ENCODE measurements at regions of chrX and their contacts with region 1.

Region 1: DNA sequence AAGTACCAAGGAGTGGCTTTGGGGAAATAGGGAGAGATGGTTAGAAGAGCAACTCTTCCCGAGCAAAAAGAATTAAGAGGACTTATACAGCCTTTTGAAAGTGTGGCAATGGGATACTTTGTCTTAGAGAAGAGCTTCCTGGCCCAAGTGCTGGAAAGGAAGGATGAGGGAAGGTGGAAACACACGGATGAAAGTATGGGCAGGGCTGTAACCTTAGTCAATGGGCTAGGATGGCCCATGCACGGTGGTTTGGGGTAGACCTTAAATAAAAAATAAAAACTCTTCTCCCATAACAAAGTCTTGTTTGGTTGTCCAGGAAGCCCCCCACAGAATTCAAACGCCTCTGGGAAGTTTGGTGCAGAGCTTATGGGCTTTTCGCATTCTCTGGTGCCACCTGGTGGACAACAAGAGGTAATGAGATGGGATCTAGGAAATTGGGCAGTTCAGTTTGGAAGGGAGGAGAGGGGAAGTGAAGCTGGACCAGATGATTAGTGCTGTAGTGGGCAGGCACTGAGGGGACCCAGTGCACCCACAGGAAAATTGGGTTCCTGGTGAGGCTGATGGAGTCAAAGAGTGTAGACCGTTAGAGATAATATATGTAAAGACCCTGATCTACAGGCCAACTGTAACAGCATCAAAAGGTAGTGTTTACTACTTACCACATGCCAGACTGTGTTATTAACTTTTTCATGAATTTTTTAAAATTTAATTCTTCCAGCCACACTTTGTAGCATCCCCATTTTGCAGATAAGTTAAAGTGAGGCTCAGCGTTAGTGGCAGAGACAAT is 13.8 kb upstream of the ENOX2 start:
- DNase-seq: peak in 4 of 5 donors; percentile 36 to 75 (median 55)
- H3K4me3 ChIP-seq: no peak overlapping the region
- H3K27ac ChIP-seq: no peak overlapping the region
- H3K4me1 ChIP-seq: no peaks in the 10 kb centered on the region
- H3K27me3 ChIP-seq: peaks cover 4% of the 10 kb centered on the region
- CTCF ChIP-seq: peak; percentile 76

Region 2: GRCh38 chrX:129593137-129593536 is 1323.7 kb before region 1 on chrX:
- intact Hi-C with region 1: loop called (anchors 10 kb)
- DNase-seq: no peak
- H3K4me3 ChIP-seq: no peak overlapping the region
- H3K27ac ChIP-seq: no peak overlapping the region
- H3K4me1 ChIP-seq: no peaks in the 10 kb centered on the region
- H3K27me3 ChIP-seq: no peaks in the 10 kb centered on the region
- CTCF ChIP-seq: no peak

Region 3: DNA sequence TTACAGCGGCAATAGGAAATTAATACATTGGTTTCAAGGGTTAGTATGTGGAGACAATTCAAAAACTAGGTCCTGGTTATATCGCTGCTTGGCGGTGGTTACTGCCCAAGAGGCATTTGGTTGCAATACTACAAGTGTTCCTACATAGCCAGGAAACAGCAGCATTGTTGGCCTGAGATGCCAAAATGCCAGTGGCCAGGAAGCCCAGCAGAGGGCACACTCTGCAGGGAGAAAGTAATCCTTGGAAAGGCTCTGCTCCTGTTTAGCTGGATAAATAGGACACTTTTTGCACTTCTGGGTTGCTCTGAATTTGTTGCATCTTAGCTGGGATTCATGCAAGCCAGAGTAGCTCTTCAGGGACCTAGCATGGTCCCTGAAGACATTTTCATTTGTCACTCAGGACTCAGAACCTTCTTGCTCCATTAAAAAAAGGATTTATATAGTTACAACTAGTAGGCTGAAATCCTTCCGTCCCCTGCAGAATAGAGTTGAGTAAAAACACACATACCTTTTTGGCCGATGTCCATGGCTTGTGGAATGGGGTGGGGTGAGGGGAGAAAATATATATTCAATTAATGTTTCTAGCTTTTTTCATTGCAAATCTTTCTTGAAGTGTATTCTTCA is 523.3 kb before region 1 on chrX:
- intact Hi-C with region 1: loop called (anchors 10 kb)
- DNase-seq: peak in 4 of 5 donors; percentile 43 to 70 (median 56)
- H3K4me3 ChIP-seq: no peak overlapping the region
- H3K27ac ChIP-seq: no peak overlapping the region
- H3K4me1 ChIP-seq: no peaks in the 10 kb centered on the region
- H3K27me3 ChIP-seq: peaks cover 2% of the 10 kb centered on the region
- CTCF ChIP-seq: peak; percentile 52